HEK293 (cell line): ENCODE measurements at regions of chr7 and their contacts with region 1.

Region 1: DNA sequence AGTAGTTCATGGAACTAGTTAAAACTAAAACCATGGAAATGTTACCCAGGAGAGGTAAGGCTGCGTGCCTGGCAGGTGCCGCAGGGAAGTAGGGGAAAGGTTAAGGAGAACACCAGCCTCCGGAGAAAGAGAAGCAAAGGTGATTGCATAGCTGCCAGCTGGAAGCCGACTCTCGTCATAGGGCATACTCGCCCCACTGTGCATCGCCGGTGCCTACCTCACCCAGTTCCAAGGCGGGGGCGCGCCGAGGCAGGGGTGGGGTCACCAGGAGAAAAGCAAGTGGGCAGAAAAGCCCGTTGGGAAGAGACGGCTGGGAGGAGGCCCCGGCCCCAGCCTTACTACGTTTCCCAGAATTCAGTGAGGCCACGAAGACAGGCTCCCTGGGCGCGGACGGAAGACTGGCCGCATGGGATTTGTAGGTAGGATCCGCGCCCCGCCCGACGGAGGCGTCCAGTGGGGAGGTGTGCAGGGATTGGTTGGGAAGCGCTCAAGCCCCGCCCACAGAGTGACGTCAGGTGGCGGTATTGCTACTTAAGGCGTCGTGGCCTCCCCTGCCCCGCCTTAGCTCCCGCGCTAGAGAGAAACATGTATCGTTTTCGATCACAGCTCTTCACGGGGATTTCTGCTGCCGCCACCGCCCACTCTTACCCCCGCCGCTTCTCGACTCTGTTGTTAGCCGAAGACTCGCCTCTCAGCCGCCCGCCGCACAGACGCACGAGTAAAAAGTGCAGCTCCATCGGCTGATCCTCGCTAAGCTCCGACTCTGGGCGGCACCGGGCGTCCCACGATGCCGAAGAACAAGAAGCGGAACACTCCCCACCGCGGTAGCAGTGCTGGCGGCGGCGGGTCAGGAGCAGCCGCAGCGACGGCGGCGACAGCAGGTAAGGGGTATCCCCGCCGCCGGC is at the start of gene IFRD1:
- H3K4me3 ChIP-seq: peak within 1 kb of the TSS; percentile 100
- H3K27ac ChIP-seq: peak within 1 kb of the TSS; percentile 84
- H3K4me1 ChIP-seq: peaks cover 10% of the 10 kb centered on the region; the same call in 1 of the 2 replicates
- CTCF ChIP-seq: no peak

Region 2: GRCh38 chr7:112206238-112207044 is 243.7 kb before region 1 on chr7 and contains the starts of genes DOCK4 and ZNF277:
- CTCF ChIA-PET with region 1: no interaction called
- POLR2A ChIA-PET with region 1: interaction called, 12 read pairs
- H3K4me3 ChIP-seq: peak within 1 kb of the TSS; percentile 94
- H3K27ac ChIP-seq: peak within 1 kb of the TSS; percentile 87
- H3K4me1 ChIP-seq: peaks cover 10% of the 10 kb centered on the region
- CTCF ChIP-seq: no peak

Region 3: GRCh38 chr7:112427984-112428383 is 22.2 kb before region 1 on chr7:
- CTCF ChIA-PET with region 1: interaction called, 3 read pairs
- POLR2A ChIA-PET with region 1: interaction called, 49 read pairs
- H3K4me3 ChIP-seq: no peak overlapping the region
- H3K27ac ChIP-seq: no peak overlapping the region
- H3K4me1 ChIP-seq: peaks cover 4% of the 10 kb centered on the region; the same call in 1 of the 2 replicates
- CTCF ChIP-seq: no peak

Region 4: GRCh38 chr7:112462236-112462635 is 12.1 kb after region 1 on chr7:
- CTCF ChIA-PET with region 1: interaction called, 3 read pairs
- POLR2A ChIA-PET with region 1: interaction called, 35 read pairs
- H3K4me3 ChIP-seq: no peak overlapping the region
- H3K27ac ChIP-seq: no peak overlapping the region
- H3K4me1 ChIP-seq: no peaks in the 10 kb centered on the region
- CTCF ChIP-seq: no peak

Region 5: DNA sequence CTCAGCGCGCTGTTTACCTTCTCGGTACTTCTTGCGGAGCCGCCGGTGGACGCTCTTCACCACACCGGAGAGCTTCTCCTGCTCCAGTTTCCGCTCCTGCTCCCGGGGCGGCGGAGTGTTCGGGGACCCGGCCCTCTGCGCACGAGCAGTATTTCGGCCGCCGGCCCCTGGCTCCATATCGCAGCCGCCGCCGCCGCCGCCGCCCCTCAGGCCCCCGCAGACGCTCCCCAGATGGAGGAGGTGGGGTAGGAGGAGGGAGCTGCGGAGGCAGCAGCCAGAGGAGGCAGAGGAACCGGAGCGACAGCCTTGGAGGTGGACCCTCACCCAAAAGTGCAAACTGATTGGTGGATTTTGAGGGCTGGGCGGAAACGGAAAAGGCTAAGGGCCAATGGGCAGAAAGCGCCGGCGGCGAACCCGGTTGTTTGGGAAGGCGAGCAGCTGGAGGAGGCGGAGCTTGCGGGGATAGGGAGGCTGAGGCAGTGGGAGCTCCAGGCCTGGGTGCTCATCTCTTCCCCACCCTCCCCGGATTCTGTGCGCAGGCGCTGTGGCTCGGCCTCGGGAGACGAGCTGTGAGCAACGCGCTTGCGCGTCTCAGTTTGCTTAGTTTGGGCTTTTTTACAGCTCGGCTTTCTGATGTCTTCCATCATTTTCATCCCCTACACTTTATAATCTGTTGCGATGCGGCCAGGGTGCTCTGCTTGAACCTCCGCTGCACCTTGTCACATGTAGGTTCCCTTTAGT is 489.6 kb after region 1 on chr7:
- CTCF ChIA-PET with region 1: no interaction called
- POLR2A ChIA-PET with region 1: interaction called, 11 read pairs
- H3K4me3 ChIP-seq: peak overlapping the region; percentile 96
- H3K27ac ChIP-seq: peak overlapping the region; percentile 73
- H3K4me1 ChIP-seq: no peaks in the 10 kb centered on the region
- CTCF ChIP-seq: no peak; the same call in 1 of the 2 replicates